ENCODE measurements at regions of chr1 and their contacts with region 1.

Region 1: GRCh38 chr1:28865997-28866650 is 48.2 kb upstream of the EPB41 start:
- DNase-seq: peak in 3 of 7 donors; percentile 39 to 51 (median 48)
- H3K4me3 ChIP-seq: no peak overlapping the region
- H3K27ac ChIP-seq: no peak overlapping the region
- H3K4me1 ChIP-seq: no peaks in the 10 kb centered on the region
- H3K27me3 ChIP-seq: peaks cover 4% of the 10 kb centered on the region
- CTCF ChIP-seq: no peak
- POLR2A ChIP-seq: no peak

Region 2: DNA sequence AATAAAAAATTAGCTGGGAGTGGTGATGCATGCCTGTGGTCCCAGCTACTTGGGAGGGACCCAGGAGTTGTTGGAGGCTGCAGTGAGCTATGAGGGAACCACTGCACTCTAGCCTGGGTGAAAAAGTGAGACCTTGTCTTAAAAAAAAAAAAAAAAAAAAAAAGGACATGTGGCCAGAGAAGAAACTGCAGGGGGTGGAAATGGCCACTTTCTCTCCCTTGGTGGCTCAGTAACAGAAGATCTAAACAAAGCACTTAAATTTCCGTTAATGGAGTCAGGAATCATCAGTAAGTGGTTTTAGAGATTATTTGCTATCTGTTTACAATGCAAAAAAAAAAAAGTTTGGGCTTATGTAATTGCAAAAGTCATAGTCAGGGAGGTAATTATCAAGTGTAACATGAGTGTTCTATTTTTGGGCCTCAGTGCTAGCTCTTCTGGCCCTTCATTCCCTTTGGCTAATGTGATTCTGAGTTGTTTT is 73.4 kb before region 1 on chr1:
- intact Hi-C with region 1: loop called (anchors 5 kb)
- DNase-seq: no peak
- H3K4me3 ChIP-seq: no peak overlapping the region
- H3K27ac ChIP-seq: no peak overlapping the region
- H3K4me1 ChIP-seq: no peaks in the 10 kb centered on the region
- H3K27me3 ChIP-seq: no peaks in the 10 kb centered on the region
- CTCF ChIP-seq: no peak
- POLR2A ChIP-seq: no peak